ENCODE measurements at regions of chr10 and their contacts with region 1.

Region 1: DNA sequence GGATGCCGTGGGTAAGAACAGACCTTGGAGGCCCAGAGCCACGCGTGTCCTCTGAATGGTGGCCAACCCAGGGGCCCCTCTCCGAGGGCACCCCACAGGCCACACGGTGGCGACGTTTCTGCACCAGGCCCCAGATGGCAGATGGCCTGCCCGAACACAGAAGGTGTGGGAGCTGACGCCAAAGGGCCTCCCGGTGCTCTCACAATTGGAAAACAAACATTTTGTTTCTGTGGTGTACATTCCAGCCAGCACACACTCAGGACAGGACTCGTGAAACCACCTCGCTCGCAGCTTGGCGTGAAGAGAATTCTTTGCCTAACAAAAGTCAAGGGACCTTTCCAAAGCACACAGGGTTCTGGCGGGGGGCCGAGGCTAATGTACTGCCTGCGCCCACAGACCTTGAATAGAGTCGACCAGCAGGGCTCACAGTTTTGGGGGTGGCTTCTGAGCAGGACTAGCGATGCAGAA is 112.1 kb downstream of the FAM53B start:
- DNase-seq: peak in 1 of 5 donors; percentile 37
- H3K4me3 ChIP-seq: no peak overlapping the region
- H3K4me3 Mint-ChIP-seq: no peak overlapping the region
- H3K27ac ChIP-seq: no peak overlapping the region
- H3K27ac Mint-ChIP-seq: peak overlapping the region in 6 of 7 donors; percentile 13 to 83 (median 62)
- H3K4me1 ChIP-seq: peaks cover 75% of the 10 kb centered on the region
- H3K4me1 Mint-ChIP-seq: peaks cover 45 to 95% (median 65%) of the 10 kb centered on the region in 4 donors
- H3K27me3 ChIP-seq: no peaks in the 10 kb centered on the region
- H3K27me3 Mint-ChIP-seq: no peaks in the 10 kb centered on the region

Region 2: GRCh38 chr10:124677749-124678556 is 45.9 kb after region 1 on chr10:
- CTCF ChIA-PET with region 1: interaction called, 8 read pairs
- POLR2A ChIA-PET with region 1: interaction called, 15 read pairs
- intact Hi-C with region 1: loop called (anchors 2 kb)
- DNase-seq: no peak
- H3K4me3 ChIP-seq: peak overlapping the region; percentile 36 to 56
- H3K4me3 Mint-ChIP-seq: peak overlapping the region; percentile 76 to 88 (median 79)
- H3K27ac ChIP-seq: peak overlapping the region; percentile 54
- H3K27ac Mint-ChIP-seq: peak overlapping the region; percentile 85 to 97 (median 92)
- H3K4me1 ChIP-seq: peaks cover 96% of the 10 kb centered on the region
- H3K4me1 Mint-ChIP-seq: peaks cover 70 to 99% (median 89%) of the 10 kb centered on the region in 4 donors
- H3K27me3 ChIP-seq: no peaks in the 10 kb centered on the region
- H3K27me3 Mint-ChIP-seq: no peaks in the 10 kb centered on the region

Region 3: GRCh38 chr10:124732931-124733570 is 101.0 kb after region 1 on chr10:
- CTCF ChIA-PET with region 1: interaction called, 49 read pairs
- POLR2A ChIA-PET with region 1: interaction called, 11 read pairs
- intact Hi-C with region 1: no loop called
- DNase-seq: peak; percentile 37 to 77 (median 48)
- H3K4me3 ChIP-seq: peak overlapping the region; percentile 9 to 15
- H3K4me3 Mint-ChIP-seq: peak overlapping the region; percentile 72 to 93 (median 80)
- H3K27ac ChIP-seq: peak overlapping the region; percentile 78
- H3K27ac Mint-ChIP-seq: peak overlapping the region; percentile 87 to 96 (median 94)
- H3K4me1 ChIP-seq: peaks cover 100% of the 10 kb centered on the region
- H3K4me1 Mint-ChIP-seq: peaks cover 77 to 100% (median 90%) of the 10 kb centered on the region in 4 donors
- H3K27me3 ChIP-seq: no peaks in the 10 kb centered on the region
- H3K27me3 Mint-ChIP-seq: no peaks in the 10 kb centered on the region